T-cell (primary cell): ENCODE measurements at regions of chr11 and their contacts with region 1.

Region 1: GRCh38 chr11:2002807-2003206 is 5.2 kb upstream of the H19 start:
- DNase-seq: no peak
- ATAC-seq: peak; percentile 34 to 64 (median 60)
- H3K4me3 ChIP-seq: no peak overlapping the region
- H3K4me3 Mint-ChIP-seq: no peak overlapping the region
- H3K27ac ChIP-seq: no peak overlapping the region
- H3K27ac Mint-ChIP-seq: no peak overlapping the region
- H3K4me1 ChIP-seq: no peaks in the 10 kb centered on the region
- H3K4me1 Mint-ChIP-seq: no peaks in the 10 kb centered on the region
- H3K27me3 ChIP-seq: no peaks in the 10 kb centered on the region
- H3K27me3 Mint-ChIP-seq: no peaks in the 10 kb centered on the region

Region 2: GRCh38 chr11:1652771-1653540 is 349.9 kb before region 1 on chr11:
- CTCF ChIA-PET with region 1: interaction called, 4 to 10 read pairs
- POLR2A ChIA-PET with region 1: no interaction called
- DNase-seq: peak; percentile 34 to 84 (median 69)
- ATAC-seq: peak; percentile 84 to 92 (median 87)
- H3K4me3 ChIP-seq: no peak overlapping the region
- H3K4me3 Mint-ChIP-seq: no peak overlapping the region
- H3K27ac ChIP-seq: no peak overlapping the region
- H3K27ac Mint-ChIP-seq: no peak overlapping the region
- H3K4me1 ChIP-seq: peaks cover 0 to 4% of the 10 kb centered on the region in 2 experiments
- H3K4me1 Mint-ChIP-seq: no peaks in the 10 kb centered on the region
- H3K27me3 ChIP-seq: peaks cover 0 to 64% of the 10 kb centered on the region in 2 experiments
- H3K27me3 Mint-ChIP-seq: peaks cover 7 to 33% of the 10 kb centered on the region in 2 donors

Region 3: GRCh38 chr11:1694064-1694845 is 308.6 kb before region 1 on chr11:
- CTCF ChIA-PET with region 1: interaction called in 1 of 2 experiments, 13 read pairs
- POLR2A ChIA-PET with region 1: no interaction called
- DNase-seq: peak; percentile 30 to 89 (median 69)
- ATAC-seq: peak; percentile 81 to 88 (median 85)
- H3K4me3 ChIP-seq: peak overlapping the region in 1 of 2 donors; percentile 34
- H3K4me3 Mint-ChIP-seq: peak overlapping the region in 1 of 3 donors; percentile 24
- H3K27ac ChIP-seq: no peak overlapping the region
- H3K27ac Mint-ChIP-seq: no peak overlapping the region
- H3K4me1 ChIP-seq: peaks cover 0 to 31% of the 10 kb centered on the region in 2 experiments
- H3K4me1 Mint-ChIP-seq: peaks cover 4 to 11% (median 9%) of the 10 kb centered on the region in 3 donors
- H3K27me3 ChIP-seq: peaks cover 0 to 68% of the 10 kb centered on the region in 2 experiments
- H3K27me3 Mint-ChIP-seq: peaks cover 8 to 40% of the 10 kb centered on the region in 2 donors